ENCODE measurements at regions of chr10 and their contacts with region 1.

Region 1: DNA sequence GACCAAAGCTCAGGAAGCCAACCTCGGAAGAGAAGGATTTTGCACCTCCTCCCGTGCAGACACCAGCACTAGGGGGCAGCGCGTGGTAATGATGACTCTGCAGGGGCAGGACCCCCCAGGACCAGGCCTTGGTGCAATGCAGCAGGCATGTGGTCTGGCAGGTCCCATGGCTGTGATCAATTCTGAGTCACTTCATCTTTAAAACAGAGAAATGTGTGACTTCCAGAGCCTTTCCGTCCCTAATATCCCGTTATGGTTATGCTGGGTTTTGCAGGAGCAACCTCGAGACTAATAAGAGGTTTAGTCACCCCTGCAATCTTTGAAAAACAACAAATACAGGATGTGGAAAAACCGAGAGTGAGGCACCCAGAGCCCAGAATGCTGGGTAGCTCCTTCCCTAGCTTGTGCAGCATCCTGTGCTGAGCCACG is 30.2 kb upstream of the GJD4 start:
- DNase-seq: no peak
- H3K4me3 Mint-ChIP-seq: no peak overlapping the region
- H3K27ac Mint-ChIP-seq: no peak overlapping the region
- H3K4me1 Mint-ChIP-seq: peaks cover 2% of the 10 kb centered on the region
- H3K27me3 Mint-ChIP-seq: no peaks in the 10 kb centered on the region

Region 2: GRCh38 chr10:35563261-35563891 is 11.6 kb before region 1 on chr10:
- CTCF ChIA-PET with region 1: interaction called, 16 read pairs
- POLR2A ChIA-PET with region 1: interaction called, 3 read pairs
- DNase-seq: peak; percentile 45
- H3K4me3 Mint-ChIP-seq: no peak overlapping the region
- H3K27ac Mint-ChIP-seq: no peak overlapping the region
- H3K4me1 Mint-ChIP-seq: peaks cover 5% of the 10 kb centered on the region
- H3K27me3 Mint-ChIP-seq: no peaks in the 10 kb centered on the region

Region 3: DNA sequence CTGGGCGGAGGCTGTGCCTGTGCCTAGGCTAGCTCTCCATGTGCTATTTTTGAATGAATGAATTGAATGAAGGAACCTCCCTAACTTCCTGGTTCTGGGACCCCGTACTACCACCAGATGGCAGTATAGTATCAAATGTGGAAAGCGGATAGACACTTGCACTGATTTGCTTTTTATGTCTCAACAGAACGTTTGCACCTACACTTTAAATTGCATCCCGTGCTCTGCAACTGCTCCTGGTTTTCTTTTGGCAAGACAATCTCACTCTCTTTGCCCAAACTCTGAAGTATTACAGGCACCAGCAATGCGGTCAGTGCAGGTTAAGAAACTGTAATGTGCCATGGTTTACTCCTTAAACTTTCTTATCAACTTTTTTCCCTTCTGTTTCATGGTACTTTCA is 60.6 kb after region 1 on chr10:
- CTCF ChIA-PET with region 1: no interaction called
- POLR2A ChIA-PET with region 1: no interaction called
- DNase-seq: peak; percentile 33
- H3K4me3 Mint-ChIP-seq: no peak overlapping the region
- H3K27ac Mint-ChIP-seq: no peak overlapping the region
- H3K4me1 Mint-ChIP-seq: peaks cover 17% of the 10 kb centered on the region
- H3K27me3 Mint-ChIP-seq: peaks cover 37% of the 10 kb centered on the region